ENCODE measurements at regions of chr2 and their contacts with region 1.

Region 1: DNA sequence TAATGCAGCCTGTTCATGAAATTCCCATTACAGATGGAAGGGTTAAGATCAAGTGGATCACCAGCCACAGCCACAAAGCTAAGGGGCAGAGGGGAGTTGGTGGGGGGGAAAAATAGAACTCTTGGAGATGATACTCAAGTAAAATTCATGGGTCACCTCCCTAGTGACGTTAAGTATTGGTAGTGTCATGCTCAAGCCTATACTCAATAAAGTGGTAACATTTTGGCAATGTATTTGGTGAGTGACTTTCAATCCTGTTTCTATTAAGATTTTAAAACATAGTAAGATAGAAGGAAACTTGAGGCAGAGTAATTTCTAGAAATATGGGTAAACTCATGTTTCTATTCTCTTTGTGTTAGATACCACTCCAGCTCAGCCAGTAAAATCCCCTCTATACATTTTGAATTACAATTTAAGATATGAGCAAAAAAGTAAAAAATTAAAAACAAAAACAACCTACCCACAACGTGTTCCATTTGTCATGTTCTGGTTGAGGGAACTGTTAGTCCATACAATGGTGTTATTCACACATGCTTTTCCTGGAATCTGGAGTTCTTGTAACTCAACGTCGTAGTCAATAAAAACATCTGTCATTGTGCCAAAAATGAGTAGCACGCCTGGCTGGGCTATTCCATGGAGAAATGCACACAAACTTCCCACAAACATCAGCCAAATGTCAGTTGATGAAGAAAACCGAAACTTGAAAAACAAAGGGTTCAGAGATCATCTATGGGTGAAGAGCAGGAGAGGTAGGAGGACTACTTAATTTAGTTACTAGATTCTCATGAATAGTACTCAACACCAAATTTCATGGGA is 18.1 kb downstream of the ABCB11 start:
- DNase-seq: no peak

Region 2: DNA sequence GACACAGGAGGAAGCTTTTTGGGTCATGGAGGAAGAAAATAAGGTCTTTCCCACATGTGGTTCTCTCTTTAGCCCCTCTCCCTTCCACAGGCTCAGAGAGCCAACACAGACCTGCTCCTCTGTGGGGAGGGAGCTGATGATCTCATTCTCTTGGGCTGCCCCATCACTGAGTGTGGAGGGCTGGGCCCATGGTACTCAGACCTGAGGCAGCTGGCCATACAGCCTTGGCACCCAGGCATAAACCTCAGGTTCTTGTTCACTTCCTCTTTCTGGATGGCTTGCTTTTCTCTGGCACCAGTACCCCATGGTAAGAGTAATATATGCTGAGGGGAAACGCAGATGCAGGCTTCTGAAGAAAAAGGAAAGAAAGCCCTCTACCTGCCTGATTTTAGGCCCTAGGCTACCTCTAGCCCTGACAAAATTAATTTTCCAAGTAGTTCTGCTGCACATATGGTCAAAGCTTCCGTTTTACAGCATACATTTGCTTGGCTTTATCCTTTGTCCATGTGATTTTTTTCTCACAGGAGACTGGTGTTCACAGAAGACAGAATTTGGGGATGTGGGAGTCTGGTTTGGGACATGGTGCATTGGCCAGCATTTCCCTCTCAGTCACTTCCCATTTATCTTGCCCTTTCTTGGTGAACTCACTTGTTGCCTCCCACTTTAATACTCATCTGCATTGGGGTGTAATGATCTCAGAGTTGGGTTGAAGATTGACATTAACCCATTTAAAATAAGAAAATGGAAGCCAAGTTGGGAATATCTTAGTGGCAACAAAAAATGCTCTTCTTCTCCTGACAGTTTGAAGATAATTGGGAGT is 67.4 kb after region 1 on chr2:
- intact Hi-C with region 1: loop called (anchors 5 kb)
- DNase-seq: no peak

Region 3: DNA sequence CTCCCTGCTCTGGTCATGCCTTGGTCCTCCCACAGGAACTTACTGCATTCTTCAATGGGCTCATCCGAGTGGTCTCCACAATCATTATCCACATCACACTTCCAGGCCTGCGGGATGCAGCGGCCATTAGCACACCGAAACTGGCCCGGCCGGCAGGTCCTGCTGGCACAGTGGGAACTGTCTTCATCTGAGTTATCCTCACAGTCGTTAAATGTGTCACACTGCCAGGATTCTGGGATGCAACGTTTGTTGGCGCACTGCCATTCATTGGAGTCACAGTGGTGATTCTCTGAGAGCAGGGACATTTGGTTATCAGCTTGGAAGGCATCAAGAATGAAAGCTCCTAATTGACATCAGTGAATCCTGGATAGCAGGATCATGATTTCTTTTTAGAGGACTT is 160.9 kb after region 1 on chr2:
- intact Hi-C with region 1: no loop called
- DNase-seq: no peak

Measured in cardiac septum (tissue), 1 donor.